ENCODE measurements at regions of chr17 and their contacts with region 1.

Region 1: DNA sequence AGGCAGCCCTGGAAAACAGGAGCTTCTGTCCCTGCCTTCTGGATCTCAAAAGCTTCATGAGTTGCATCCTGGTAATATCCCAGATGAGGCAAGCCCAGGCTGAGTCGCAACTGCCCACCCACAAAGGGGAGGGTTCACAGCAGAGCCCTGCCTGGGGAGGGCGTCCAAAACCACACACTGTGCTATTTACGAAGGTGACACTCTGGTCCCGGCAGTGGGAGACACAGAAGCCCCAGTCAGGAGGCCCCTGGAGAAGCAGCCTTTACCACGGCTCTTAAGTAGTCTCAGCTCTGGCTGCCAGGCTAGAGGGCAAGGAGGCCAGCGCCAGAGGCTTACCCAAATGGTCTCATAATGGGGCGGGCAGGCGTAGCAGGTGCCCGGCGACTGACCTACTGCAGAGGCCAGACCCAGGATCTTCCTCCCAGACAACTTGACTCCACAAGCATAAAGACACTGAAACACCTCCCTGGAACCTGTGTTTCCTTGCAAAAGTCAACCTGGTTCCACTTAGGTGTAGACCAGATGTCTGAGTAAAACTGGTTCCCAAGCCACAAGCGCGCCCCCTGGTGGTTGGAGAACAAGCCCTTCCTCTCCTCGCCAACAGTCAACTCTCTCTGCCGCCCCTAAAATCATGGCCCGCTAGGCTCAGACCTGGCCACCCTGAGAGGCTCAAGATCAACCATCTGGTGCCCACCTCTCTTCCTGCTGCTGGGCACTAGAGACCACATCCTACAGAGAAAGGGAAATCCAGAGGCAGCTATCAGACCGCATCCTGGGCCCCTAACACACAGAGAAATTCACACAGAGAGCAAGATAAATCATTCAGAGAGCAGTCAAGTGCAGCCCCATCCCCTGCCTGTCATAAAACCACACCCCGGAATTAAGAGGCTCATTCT is 5.2 kb downstream of the AXIN2 start:
- DNase-seq: peak; percentile 95
- H3K4me3 ChIP-seq: no peak overlapping the region
- H3K27ac ChIP-seq: no peak overlapping the region
- H3K4me1 ChIP-seq: peaks cover 0 to 52% (median 12%) of the 10 kb centered on the region in 4 donors
- H3K27me3 ChIP-seq: no peaks in the 10 kb centered on the region
- CTCF ChIP-seq: peak; percentile 77 to 84 (median 84)
- EP300 ChIP-seq: no peak
- POLR2A ChIP-seq: no peak

Region 2: DNA sequence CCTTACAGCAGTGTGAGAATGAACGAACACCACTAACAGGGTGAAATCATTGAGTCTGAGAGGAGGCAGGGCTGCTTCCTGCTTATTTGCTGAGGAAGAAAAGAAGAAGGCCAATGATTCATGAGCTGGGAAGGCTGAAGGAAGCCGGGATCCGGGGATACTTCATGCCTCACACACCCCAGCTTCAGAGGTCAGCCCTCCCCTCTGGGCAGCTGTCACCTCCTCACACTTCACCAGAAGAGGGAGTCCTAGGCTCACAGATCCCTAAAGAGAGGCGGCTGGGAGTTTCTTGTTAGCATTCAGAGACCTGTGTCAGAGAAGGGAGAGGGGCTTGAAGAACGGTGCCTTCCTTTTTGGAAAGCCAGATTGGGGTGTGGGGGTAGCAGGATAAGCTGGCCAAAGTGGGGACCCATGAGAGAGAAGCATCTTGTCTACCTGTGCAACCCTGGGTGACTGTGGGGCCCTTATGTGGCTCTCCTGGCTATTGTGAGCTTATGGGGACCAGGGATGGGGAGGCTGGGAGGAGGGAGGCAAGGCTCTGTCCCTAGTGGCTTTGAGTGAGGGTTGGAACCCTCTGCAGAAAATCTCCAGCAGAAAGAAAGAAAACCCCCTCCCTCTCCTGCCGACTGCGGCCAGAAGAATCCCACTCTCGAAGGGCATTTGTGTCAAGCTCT is 324.5 kb before region 1 on chr17:
- intact Hi-C with region 1: loop called (anchors 5 kb)
- DNase-seq: no peak
- H3K4me3 ChIP-seq: no peak overlapping the region
- H3K27ac ChIP-seq: no peak overlapping the region
- H3K4me1 ChIP-seq: peaks cover 0 to 7% (median 4%) of the 10 kb centered on the region in 4 donors
- H3K27me3 ChIP-seq: peaks cover 0 to 10% (median 0%) of the 10 kb centered on the region in 4 donors
- CTCF ChIP-seq: peak; percentile 61 to 76 (median 75)
- EP300 ChIP-seq: no peak
- POLR2A ChIP-seq: no peak

Region 3: GRCh38 chr17:65278050-65278819 is 278.0 kb before region 1 on chr17:
- intact Hi-C with region 1: loop called (anchors 5 kb)
- DNase-seq: no peak
- H3K4me3 ChIP-seq: peak overlapping the region in 1 of 4 donors; percentile 23
- H3K27ac ChIP-seq: peak overlapping the region; percentile 59 to 74 (median 68)
- H3K4me1 ChIP-seq: peaks cover 0 to 29% (median 24%) of the 10 kb centered on the region in 4 donors
- H3K27me3 ChIP-seq: no peaks in the 10 kb centered on the region
- CTCF ChIP-seq: peak; percentile 46 to 66 (median 54)
- EP300 ChIP-seq: no peak
- POLR2A ChIP-seq: no peak

Region 4: GRCh38 chr17:65294179-65294720 is 262.0 kb before region 1 on chr17:
- intact Hi-C with region 1: loop called (anchors 5 kb)
- DNase-seq: no peak
- H3K4me3 ChIP-seq: no peak overlapping the region
- H3K27ac ChIP-seq: no peak overlapping the region
- H3K4me1 ChIP-seq: peaks cover 0 to 9% (median 8%) of the 10 kb centered on the region in 4 donors
- H3K27me3 ChIP-seq: no peaks in the 10 kb centered on the region
- CTCF ChIP-seq: peak; percentile 75 to 84 (median 78)
- EP300 ChIP-seq: no peak
- POLR2A ChIP-seq: no peak

Region 5: GRCh38 chr17:65463242-65463641 is 93.0 kb before region 1 on chr17:
- intact Hi-C with region 1: loop called (anchors 2 kb)
- DNase-seq: peak; percentile 94
- H3K4me3 ChIP-seq: no peak overlapping the region
- H3K27ac ChIP-seq: peak overlapping the region; percentile 81 to 84 (median 82)
- H3K4me1 ChIP-seq: peaks cover 12 to 40% (median 28%) of the 10 kb centered on the region in 4 donors
- H3K27me3 ChIP-seq: no peaks in the 10 kb centered on the region
- CTCF ChIP-seq: no peak
- EP300 ChIP-seq: peak; percentile 97
- POLR2A ChIP-seq: no peak

Region 6: GRCh38 chr17:66165513-66166123 is 609.4 kb after region 1 on chr17:
- intact Hi-C with region 1: loop called (anchors 5 kb)
- DNase-seq: no peak
- H3K4me3 ChIP-seq: no peak overlapping the region
- H3K27ac ChIP-seq: no peak overlapping the region
- H3K4me1 ChIP-seq: peaks cover 0 to 29% (median 25%) of the 10 kb centered on the region in 4 donors
- H3K27me3 ChIP-seq: no peaks in the 10 kb centered on the region
- CTCF ChIP-seq: peak; percentile 75 to 81 (median 76)
- EP300 ChIP-seq: no peak
- POLR2A ChIP-seq: no peak